CD8-positive, alpha-beta T cell (primary cell): ENCODE measurements at regions of chr3 and their contacts with region 1.

Region 1: GRCh38 chr3:101868534-101869464 is 19.5 kb downstream of the NFKBIZ start:
- DNase-seq: no peak
- ATAC-seq: no peak
- H3K4me3 ChIP-seq: no peak overlapping the region
- H3K4me3 Mint-ChIP-seq: no peak overlapping the region
- H3K27ac ChIP-seq: no peak overlapping the region
- H3K27ac Mint-ChIP-seq: no peak overlapping the region
- H3K4me1 ChIP-seq: no peaks in the 10 kb centered on the region
- H3K4me1 Mint-ChIP-seq: no peaks in the 10 kb centered on the region
- H3K27me3 ChIP-seq: no peaks in the 10 kb centered on the region
- H3K27me3 Mint-ChIP-seq: no peaks in the 10 kb centered on the region
- CTCF ChIP-seq: no peak

Region 2: GRCh38 chr3:101665851-101666250 is 202.9 kb before region 1 on chr3:
- CTCF ChIA-PET with region 1: no interaction called
- POLR2A ChIA-PET with region 1: no interaction called
- intact Hi-C with region 1: no loop called
- DNase-seq: no peak
- ATAC-seq: no peak
- H3K4me3 ChIP-seq: no peak overlapping the region
- H3K4me3 Mint-ChIP-seq: no peak overlapping the region
- H3K27ac ChIP-seq: no peak overlapping the region
- H3K27ac Mint-ChIP-seq: no peak overlapping the region
- H3K4me1 ChIP-seq: no peaks in the 10 kb centered on the region
- H3K4me1 Mint-ChIP-seq: peaks cover 6% of the 10 kb centered on the region
- H3K27me3 ChIP-seq: no peaks in the 10 kb centered on the region
- H3K27me3 Mint-ChIP-seq: no peaks in the 10 kb centered on the region
- CTCF ChIP-seq: no peak

Region 3: GRCh38 chr3:101913173-101913572 is 44.4 kb after region 1 on chr3:
- CTCF ChIA-PET with region 1: no interaction called
- POLR2A ChIA-PET with region 1: no interaction called
- intact Hi-C with region 1: loop called in 1 of 2 experiments (anchors 1 kb)
- DNase-seq: no peak
- ATAC-seq: no peak
- H3K4me3 ChIP-seq: no peak overlapping the region
- H3K4me3 Mint-ChIP-seq: no peak overlapping the region
- H3K27ac ChIP-seq: no peak overlapping the region
- H3K27ac Mint-ChIP-seq: no peak overlapping the region
- H3K4me1 ChIP-seq: no peaks in the 10 kb centered on the region
- H3K4me1 Mint-ChIP-seq: no peaks in the 10 kb centered on the region
- H3K27me3 ChIP-seq: no peaks in the 10 kb centered on the region
- H3K27me3 Mint-ChIP-seq: no peaks in the 10 kb centered on the region
- CTCF ChIP-seq: no peak